Tibial artery (tissue), 4 donors: ENCODE measurements at regions of chr14 and their contacts with region 1.

Region 1: GRCh38 chr14:75487155-75487671 is 35.1 kb upstream of the BATF start:
- DNase-seq: no peak
- H3K4me3 ChIP-seq: no peak overlapping the region
- H3K27ac ChIP-seq: no peak overlapping the region
- H3K4me1 ChIP-seq: no peaks in the 10 kb centered on the region
- H3K27me3 ChIP-seq: peaks cover 0 to 8% of the 10 kb centered on the region in 2 donors
- CTCF ChIP-seq: no peak

Region 2: GRCh38 chr14:73825551-73826188 is 1661.5 kb before region 1 on chr14:
- intact Hi-C with region 1: no loop called
- DNase-seq: peak; percentile 92 to 95
- H3K4me3 ChIP-seq: no peak overlapping the region
- H3K27ac ChIP-seq: peak overlapping the region in 1 of 2 donors; percentile 24
- H3K4me1 ChIP-seq: peaks cover 0 to 11% (median 0%) of the 10 kb centered on the region in 4 donors
- H3K27me3 ChIP-seq: no peaks in the 10 kb centered on the region
- CTCF ChIP-seq: peak; percentile 93 to 94

Region 3: GRCh38 chr14:75221797-75222196 is 265.4 kb before region 1 on chr14:
- intact Hi-C with region 1: no loop called
- DNase-seq: no peak
- H3K4me3 ChIP-seq: no peak overlapping the region
- H3K27ac ChIP-seq: no peak overlapping the region
- H3K4me1 ChIP-seq: no peaks in the 10 kb centered on the region
- H3K27me3 ChIP-seq: no peaks in the 10 kb centered on the region
- CTCF ChIP-seq: no peak

Region 4: DNA sequence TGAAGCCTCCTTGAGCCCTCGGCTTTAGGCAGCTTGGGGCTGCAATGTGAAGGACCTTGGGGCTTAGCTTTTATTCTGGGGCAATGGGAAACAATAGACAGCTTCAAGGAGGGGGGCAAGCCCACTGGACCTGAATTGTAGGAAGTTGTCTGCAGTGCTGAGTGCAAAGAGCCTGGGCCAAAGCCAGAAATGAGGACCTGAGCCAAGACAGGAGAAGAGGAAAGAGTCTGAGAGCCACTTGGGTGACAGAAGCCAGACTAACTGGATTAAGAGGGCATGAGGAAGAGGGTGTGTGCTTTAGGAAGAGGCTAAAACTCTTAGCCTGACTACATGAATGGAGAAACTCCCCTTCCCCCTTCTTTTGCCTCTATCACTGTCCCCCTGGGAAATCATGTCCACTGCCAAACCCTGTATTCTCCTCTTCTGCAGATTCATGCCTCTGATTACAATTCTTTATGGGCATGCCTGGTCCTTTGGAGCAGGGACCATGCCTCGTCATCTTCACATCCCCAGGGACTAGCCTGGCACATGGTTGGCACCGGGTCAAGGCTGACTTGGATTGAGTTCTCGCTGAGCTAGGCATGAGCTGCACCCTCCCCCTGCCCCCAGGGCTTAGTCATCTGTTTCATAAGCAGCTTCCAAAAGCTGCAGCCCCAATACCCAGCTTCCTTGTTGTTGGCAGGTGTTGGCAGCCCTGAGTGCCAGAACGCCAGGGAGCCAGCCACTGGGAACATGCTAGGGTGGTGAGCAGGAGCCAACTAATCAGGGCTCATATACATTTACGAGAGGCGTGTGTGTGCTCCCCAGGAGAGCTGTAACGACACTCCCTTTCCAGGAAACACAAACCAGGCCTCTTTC is 87.2 kb before region 1 on chr14:
- intact Hi-C with region 1: no loop called
- DNase-seq: peak; percentile 96 to 98
- H3K4me3 ChIP-seq: no peak overlapping the region
- H3K27ac ChIP-seq: peak overlapping the region; percentile 83
- H3K4me1 ChIP-seq: peaks cover 0 to 30% (median 22%) of the 10 kb centered on the region in 4 donors
- H3K27me3 ChIP-seq: no peaks in the 10 kb centered on the region
- CTCF ChIP-seq: no peak

Region 5: GRCh38 chr14:75427482-75428229 is 59.6 kb before region 1 on chr14 and contains the start of gene JDP2:
- intact Hi-C with region 1: loop called (anchors 10 kb)
- DNase-seq: peak; percentile 93 to 95
- H3K4me3 ChIP-seq: peak within 1 kb of the TSS; percentile 63 to 70
- H3K27ac ChIP-seq: peak within 1 kb of the TSS; percentile 73 to 83
- H3K4me1 ChIP-seq: peaks cover 0 to 42% (median 34%) of the 10 kb centered on the region in 4 donors
- H3K27me3 ChIP-seq: no peaks in the 10 kb centered on the region
- CTCF ChIP-seq: peak in 1 of 2 experiments; percentile 52

Region 6: GRCh38 chr14:75630695-75631452 is 143.7 kb after region 1 on chr14:
- intact Hi-C with region 1: no loop called
- DNase-seq: no peak
- H3K4me3 ChIP-seq: no peak overlapping the region
- H3K27ac ChIP-seq: no peak overlapping the region
- H3K4me1 ChIP-seq: no peaks in the 10 kb centered on the region
- H3K27me3 ChIP-seq: no peaks in the 10 kb centered on the region
- CTCF ChIP-seq: no peak